Activated CD4-positive, alpha-beta T cell treated with anti-CD3 and anti-CD28 coated beads for 36 hours (primary cell): ENCODE measurements at regions of chr13 and their contacts with region 1.

Region 1: DNA sequence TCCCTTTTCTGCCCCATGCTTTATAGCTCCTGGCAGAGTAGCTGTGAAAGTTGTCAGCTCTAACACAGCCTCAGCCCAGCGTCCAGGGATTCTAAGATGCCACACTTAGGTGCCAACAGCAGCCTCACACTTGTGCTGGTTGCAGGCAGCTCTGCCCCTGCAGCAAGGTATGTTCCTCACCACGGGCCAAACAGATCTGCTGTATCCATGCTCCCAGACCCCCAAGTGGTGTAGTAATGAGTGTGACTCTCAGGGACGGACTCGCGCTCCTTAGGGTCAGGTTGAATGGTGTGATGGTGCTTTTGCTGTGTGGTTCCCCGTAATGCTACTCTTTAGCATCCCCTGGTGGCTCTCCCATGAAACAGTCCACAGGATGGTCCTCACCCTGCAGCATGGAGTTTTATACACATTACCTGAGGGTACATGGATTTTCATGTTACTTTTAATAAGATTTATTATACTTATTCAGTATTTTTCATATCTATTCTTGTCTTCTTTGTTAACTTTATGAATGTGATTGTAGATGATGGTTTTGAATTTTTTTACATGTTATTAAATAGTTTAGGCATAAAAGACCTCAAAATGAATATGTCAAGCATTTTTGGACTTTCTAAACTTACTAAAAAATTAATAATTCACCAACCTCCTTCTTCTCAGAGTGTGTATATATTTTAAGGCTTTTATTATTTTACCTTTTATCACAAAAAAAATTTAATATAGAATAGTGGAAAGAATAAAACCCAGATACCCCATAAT is 232.5 kb downstream of the SLC7A1 start:
- DNase-seq: peak; percentile 54
- ATAC-seq: peak; percentile 96
- H3K4me3 Mint-ChIP-seq: no peak overlapping the region
- H3K27ac Mint-ChIP-seq: no peak overlapping the region
- H3K4me1 Mint-ChIP-seq: no peaks in the 10 kb centered on the region
- H3K27me3 Mint-ChIP-seq: peaks cover 5% of the 10 kb centered on the region

Region 2: DNA sequence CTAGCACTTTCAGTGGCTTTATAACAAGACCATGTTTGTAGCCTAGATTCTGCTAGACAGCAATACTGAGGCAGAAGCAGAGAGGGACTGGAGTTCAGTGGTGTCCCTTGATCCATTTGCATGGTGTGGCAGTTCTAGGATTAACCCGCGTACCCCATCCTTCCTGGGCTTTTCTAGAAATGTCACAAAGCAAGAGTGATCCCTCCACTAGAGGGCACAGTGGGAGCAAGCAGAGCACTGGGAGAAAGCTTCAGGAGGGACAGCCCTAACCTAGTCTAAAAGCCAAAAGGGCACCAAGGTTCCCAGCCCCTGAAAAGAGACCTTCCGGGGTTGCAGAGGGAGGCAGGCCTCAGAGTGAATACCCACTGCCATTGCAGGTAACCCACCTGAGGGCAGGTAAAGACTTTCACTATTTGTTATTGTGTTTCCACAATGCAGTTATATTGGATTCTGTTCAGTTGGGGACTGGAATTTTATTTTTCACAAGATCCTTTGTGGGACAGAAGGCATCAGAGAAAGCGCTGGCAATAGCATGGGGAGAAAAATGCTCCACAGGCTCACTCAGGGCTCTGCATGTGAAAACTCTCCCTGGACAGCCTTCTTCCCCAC is 1038.7 kb before region 1 on chr13:
- CTCF ChIA-PET with region 1: no interaction called
- POLR2A ChIA-PET with region 1: no interaction called
- intact Hi-C with region 1: loop called in 1 of 2 experiments (anchors 10 kb)
- DNase-seq: peak; percentile 74
- ATAC-seq: peak; percentile 78
- H3K4me3 Mint-ChIP-seq: no peak overlapping the region
- H3K27ac Mint-ChIP-seq: no peak overlapping the region
- H3K4me1 Mint-ChIP-seq: peaks cover 3% of the 10 kb centered on the region
- H3K27me3 Mint-ChIP-seq: no peaks in the 10 kb centered on the region

Region 3: DNA sequence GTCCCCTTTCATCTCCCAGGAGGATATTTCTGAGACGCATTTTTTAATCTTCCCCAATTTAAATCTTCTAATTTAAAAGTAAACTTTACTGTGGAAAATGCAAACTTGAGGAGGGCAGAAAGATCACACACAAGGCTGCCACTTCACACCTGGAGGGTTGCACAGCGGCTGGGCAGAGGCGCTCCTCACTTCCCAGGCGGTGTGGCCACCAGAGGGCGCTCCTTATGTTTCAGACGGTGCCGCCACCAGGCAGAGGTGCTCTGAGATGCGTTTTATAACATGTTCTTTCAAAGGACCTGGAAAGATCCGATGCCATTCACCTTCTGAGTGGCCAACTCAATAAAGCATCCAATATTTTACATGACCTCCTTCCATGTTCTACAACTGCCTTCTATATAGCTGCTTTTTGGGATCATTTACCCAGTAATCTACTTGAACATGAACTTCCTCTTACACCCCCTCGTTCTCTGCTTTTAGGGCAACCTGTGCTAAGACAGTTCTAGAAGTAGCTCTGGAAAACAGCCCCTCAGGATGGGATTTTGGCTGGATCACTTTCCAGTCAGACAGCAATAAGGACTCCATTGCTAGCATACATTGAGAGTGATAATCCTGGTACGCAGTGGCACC is 557.7 kb before region 1 on chr13:
- CTCF ChIA-PET with region 1: no interaction called
- POLR2A ChIA-PET with region 1: no interaction called
- intact Hi-C with region 1: loop called in 1 of 2 experiments (anchors 1 kb)
- DNase-seq: peak; percentile 78
- ATAC-seq: no peak
- H3K4me3 Mint-ChIP-seq: no peak overlapping the region
- H3K27ac Mint-ChIP-seq: no peak overlapping the region
- H3K4me1 Mint-ChIP-seq: no peaks in the 10 kb centered on the region
- H3K27me3 Mint-ChIP-seq: peaks cover 11% of the 10 kb centered on the region

Region 4: DNA sequence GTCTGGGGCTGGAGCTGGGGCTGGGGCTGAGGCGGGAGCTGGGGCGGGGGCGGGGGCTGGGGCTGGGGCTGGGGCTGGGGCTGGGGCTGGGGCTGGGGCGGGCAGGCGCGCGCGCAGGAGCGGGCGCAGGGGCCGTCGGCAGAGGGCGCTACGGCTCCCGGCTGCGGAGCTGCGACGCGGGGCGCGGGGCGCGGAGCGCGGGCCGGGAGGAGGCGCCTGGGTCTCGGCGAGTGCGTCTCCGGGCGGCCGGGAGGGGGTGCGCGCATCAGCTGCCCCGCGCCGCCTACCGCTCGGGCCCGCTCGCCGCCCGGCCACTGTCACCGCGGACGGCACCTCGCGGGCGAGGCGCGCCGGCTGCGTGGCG is 543.3 kb before region 1 on chr13:
- CTCF ChIA-PET with region 1: interaction called, 5 read pairs
- POLR2A ChIA-PET with region 1: no interaction called
- intact Hi-C with region 1: loop called in 1 of 2 experiments (anchors 2 kb)
- DNase-seq: peak; percentile 78
- ATAC-seq: peak; percentile 92
- H3K4me3 Mint-ChIP-seq: no peak overlapping the region
- H3K27ac Mint-ChIP-seq: no peak overlapping the region
- H3K4me1 Mint-ChIP-seq: peaks cover 2% of the 10 kb centered on the region
- H3K27me3 Mint-ChIP-seq: peaks cover 54% of the 10 kb centered on the region

Region 5: DNA sequence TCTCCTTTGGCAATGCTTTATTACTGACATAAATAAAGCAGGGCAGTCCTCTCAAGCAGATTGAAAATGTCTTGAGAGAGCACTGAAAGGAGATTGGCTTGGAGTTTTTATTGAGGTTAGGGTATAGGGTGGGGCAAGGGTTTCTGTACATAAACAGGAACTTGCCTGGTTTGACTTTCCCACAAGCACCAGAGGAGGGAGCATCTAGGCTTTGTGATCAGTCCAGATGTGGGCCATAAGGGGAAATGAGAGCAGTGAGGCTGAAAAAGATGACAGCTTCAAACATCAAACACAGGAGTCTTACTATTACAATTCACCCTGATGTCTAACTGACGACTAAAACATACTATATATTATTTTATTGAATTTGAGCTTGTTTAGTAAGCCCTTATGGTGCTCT is 282.0 kb before region 1 on chr13:
- CTCF ChIA-PET with region 1: interaction called, 3 read pairs
- POLR2A ChIA-PET with region 1: no interaction called
- intact Hi-C with region 1: loop called (anchors 5 kb)
- DNase-seq: peak; percentile 6
- ATAC-seq: peak; percentile 66
- H3K4me3 Mint-ChIP-seq: no peak overlapping the region
- H3K27ac Mint-ChIP-seq: no peak overlapping the region
- H3K4me1 Mint-ChIP-seq: peaks cover 14% of the 10 kb centered on the region
- H3K27me3 Mint-ChIP-seq: no peaks in the 10 kb centered on the region

Region 6: DNA sequence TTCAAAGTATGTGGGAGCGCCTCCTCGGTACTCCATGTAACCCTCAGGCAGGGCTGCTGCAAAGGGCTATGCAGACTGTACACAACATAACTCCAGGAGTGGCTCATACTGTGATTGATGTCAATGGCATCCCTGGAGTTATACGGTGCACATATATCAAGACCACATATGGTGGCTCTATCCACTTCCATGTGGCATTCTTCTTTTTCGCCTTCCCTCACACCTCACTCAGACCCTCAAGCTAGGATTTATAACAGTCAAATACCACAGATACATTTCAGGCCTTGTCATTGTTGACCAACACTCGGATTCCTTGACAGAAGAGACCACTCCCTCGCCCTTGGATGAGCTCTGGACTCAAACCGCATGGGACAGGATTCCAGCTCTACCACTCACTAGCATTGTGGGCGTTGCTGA is 498.7 kb after region 1 on chr13:
- CTCF ChIA-PET with region 1: no interaction called
- POLR2A ChIA-PET with region 1: no interaction called
- intact Hi-C with region 1: no loop called
- DNase-seq: no peak
- ATAC-seq: no peak
- H3K4me3 Mint-ChIP-seq: no peak overlapping the region
- H3K27ac Mint-ChIP-seq: no peak overlapping the region
- H3K4me1 Mint-ChIP-seq: peaks cover 13% of the 10 kb centered on the region
- H3K27me3 Mint-ChIP-seq: peaks cover 4% of the 10 kb centered on the region